Right cardiac atrium (tissue), 5 donors: ENCODE measurements at regions of chr3 and their contacts with region 1.

Region 1: GRCh38 chr3:25156626-25157025 is 271.4 kb upstream of the RARB start:
- DNase-seq: no peak
- ATAC-seq: peak; percentile 93 to 95
- H3K4me3 ChIP-seq: no peak overlapping the region
- H3K27ac ChIP-seq: no peak overlapping the region
- H3K4me1 ChIP-seq: no peaks in the 10 kb centered on the region
- H3K27me3 ChIP-seq: no peaks in the 10 kb centered on the region

Region 2: GRCh38 chr3:24981924-24982323 is 174.7 kb before region 1 on chr3:
- intact Hi-C with region 1: no loop called
- DNase-seq: peak in 1 of 3 donors; percentile 6
- ATAC-seq: no peak
- H3K4me3 ChIP-seq: no peak overlapping the region
- H3K27ac ChIP-seq: no peak overlapping the region
- H3K4me1 ChIP-seq: no peaks in the 10 kb centered on the region
- H3K27me3 ChIP-seq: no peaks in the 10 kb centered on the region

Region 3: GRCh38 chr3:25057379-25057778 is 99.2 kb before region 1 on chr3:
- intact Hi-C with region 1: loop called in 1 of 4 experiments (anchors 10 kb)
- DNase-seq: no peak
- ATAC-seq: no peak
- H3K4me3 ChIP-seq: no peak overlapping the region
- H3K27ac ChIP-seq: no peak overlapping the region
- H3K4me1 ChIP-seq: peaks cover 3% of the 10 kb centered on the region
- H3K27me3 ChIP-seq: no peaks in the 10 kb centered on the region